Stomach (tissue), 19 donors: ENCODE measurements at regions of chr9 and their contacts with region 1.

Region 1: DNA sequence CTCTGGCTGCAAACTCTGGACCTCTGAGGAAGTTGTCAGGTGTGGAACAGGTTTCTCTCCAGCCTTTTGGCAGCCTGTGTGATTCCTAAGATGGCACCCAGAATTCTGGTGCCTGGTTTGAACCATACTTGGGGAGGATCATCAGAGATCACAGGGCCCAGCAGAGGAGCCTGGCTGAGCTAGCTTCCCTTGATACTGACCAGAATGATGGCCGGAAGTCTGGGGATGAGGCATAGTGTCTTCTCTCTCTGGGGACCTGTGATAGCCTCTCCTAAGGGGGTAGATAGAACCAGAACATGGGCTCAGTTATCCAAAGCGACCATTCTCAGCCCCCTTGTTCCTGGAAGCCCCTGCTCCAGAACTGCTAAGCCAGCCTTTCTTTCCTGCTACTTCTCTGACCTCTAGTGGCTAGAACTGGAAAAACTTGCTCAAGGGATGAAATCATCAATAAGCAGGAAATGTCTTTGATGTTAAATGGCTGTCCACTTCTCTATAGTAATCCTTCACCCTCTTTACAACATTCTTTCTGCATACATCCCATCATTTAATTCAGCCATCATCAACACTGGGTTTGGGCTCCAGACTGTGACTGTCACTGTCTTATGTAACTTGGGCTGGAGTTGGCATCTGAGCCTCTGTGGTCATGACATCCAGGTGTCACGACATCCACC is 55.1 kb downstream of the C9orf152 start:
- DNase-seq: peak in 1 of 2 donors; percentile 81
- H3K4me3 ChIP-seq: no peak overlapping the region
- H3K27ac ChIP-seq: peak overlapping the region in 3 of 5 donors; percentile 15 to 79 (median 53)
- H3K4me1 ChIP-seq: peaks cover 12 to 77% (median 51%) of the 10 kb centered on the region in 4 donors
- H3K27me3 ChIP-seq: no peaks in the 10 kb centered on the region
- CTCF ChIP-seq: peak in 5 of 7 experiments; percentile 45 to 77 (median 71)
- EP300 ChIP-seq: no peak
- POLR2A ChIP-seq: no peak

Region 2: DNA sequence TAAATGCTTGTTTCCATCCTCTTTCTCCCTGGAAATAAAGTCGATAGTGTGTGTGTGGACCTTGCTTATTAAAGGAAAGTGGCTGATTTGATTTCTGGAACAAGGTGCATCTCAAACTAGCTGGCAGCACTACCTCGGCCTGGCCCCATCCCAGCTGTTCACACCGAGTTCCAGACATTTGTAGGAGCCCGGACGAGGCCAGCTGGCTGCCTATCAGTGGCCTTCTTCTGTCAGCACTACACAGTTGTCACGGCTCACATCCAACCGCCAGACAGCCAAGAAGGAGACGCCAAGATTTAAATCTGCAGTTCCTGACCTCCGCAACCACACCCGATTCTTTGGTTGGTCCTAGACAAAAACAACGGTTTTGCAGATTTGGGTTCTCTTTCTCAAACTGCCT is 309.2 kb before region 1 on chr9:
- intact Hi-C with region 1: no loop called
- DNase-seq: peak in 1 of 2 donors; percentile 43
- H3K4me3 ChIP-seq: no peak overlapping the region
- H3K27ac ChIP-seq: no peak overlapping the region
- H3K4me1 ChIP-seq: no peaks in the 10 kb centered on the region
- H3K27me3 ChIP-seq: no peaks in the 10 kb centered on the region
- CTCF ChIP-seq: no peak
- EP300 ChIP-seq: no peak
- POLR2A ChIP-seq: no peak

Region 3: DNA sequence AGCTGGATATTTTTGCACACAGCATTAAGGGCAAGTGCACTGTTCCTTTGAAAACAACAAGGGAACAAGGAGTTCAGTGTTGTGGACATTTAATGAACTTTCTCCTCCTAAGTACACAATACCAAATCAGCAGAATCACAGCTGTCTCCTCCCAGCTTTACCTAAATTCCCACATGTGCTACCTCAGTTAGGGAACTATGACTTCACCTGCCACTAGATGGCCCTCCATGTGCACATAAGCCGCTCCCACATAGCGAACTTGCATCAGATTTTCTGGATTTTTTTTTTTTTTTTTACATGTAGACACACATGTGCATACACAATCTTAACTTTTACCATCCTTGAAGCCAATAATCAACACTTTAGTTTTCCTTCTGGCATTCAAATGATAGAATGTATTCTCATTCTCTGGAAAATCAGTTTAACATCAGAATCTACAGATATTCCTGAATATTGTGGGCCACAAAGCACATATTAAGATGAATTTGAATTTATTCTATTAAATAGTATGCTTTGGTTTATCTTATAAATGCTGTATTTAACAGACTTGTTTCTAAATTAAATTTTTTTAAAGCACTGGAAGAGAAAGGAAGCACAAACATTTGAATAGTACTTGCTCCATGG is 249.2 kb before region 1 on chr9:
- intact Hi-C with region 1: loop called (anchors 5 kb)
- DNase-seq: peak; percentile 57 to 90
- H3K4me3 ChIP-seq: no peak overlapping the region
- H3K27ac ChIP-seq: no peak overlapping the region
- H3K4me1 ChIP-seq: peaks cover 0 to 31% (median 9%) of the 10 kb centered on the region in 4 donors
- H3K27me3 ChIP-seq: no peaks in the 10 kb centered on the region
- CTCF ChIP-seq: peak in 5 of 7 experiments; percentile 59 to 86 (median 68)
- EP300 ChIP-seq: no peak
- POLR2A ChIP-seq: no peak

Region 4: DNA sequence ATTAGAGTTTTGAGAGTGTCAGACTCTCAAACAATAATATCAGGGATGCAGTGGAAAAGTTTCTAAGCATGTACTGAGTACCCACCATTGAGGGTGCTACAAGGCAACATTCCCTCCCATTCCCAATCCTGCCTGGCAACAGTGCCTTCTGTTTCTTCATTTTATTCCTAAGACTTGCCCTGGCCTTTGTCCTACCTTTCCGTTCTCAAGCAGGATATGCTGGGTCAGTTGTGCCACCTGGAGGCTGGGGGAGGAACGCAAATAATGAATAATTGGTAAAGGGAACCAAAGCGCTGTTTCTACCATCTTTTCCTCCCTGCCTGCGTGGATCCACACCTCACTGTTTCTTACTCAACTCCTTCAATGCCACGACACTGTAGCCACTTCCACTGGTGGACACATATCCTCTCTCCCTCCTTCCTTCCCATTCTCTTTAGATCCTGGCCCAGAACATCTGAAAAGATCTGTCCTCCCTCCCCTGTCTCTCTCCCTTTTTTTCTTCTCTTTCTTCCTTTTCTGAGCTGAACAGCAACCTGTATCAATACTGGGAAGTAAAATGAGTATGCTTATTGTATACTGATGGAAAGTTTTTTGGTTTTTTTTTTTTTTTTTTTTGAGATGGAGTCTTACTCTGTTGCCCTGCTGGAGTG is 94.4 kb before region 1 on chr9:
- intact Hi-C with region 1: loop called (anchors 5 kb)
- DNase-seq: peak; percentile 50 to 80
- H3K4me3 ChIP-seq: no peak overlapping the region
- H3K27ac ChIP-seq: no peak overlapping the region
- H3K4me1 ChIP-seq: peaks cover 0 to 19% (median 6%) of the 10 kb centered on the region in 4 donors
- H3K27me3 ChIP-seq: no peaks in the 10 kb centered on the region
- CTCF ChIP-seq: peak in 5 of 7 experiments; percentile 18 to 59 (median 52)
- EP300 ChIP-seq: no peak
- POLR2A ChIP-seq: no peak